ENCODE measurements at regions of chr11 and their contacts with region 1.

Region 1: GRCh38 chr11:83285771-83286528 is at the start of gene CCDC90B:
- DNase-seq: peak; percentile 96
- ATAC-seq: peak; percentile 98
- H3K4me3 ChIP-seq: peak within 1 kb of the TSS; percentile 79 to 99
- H3K27ac ChIP-seq: peak within 1 kb of the TSS; percentile 95
- H3K4me1 ChIP-seq: peaks cover 12% of the 10 kb centered on the region
- H3K27me3 ChIP-seq: no peaks in the 10 kb centered on the region
- CTCF ChIP-seq: peak; percentile 80; the same call in 1 of the 2 replicates
- total RNA-seq, gene CCDC90B: 41.9 TPM

Region 2: DNA sequence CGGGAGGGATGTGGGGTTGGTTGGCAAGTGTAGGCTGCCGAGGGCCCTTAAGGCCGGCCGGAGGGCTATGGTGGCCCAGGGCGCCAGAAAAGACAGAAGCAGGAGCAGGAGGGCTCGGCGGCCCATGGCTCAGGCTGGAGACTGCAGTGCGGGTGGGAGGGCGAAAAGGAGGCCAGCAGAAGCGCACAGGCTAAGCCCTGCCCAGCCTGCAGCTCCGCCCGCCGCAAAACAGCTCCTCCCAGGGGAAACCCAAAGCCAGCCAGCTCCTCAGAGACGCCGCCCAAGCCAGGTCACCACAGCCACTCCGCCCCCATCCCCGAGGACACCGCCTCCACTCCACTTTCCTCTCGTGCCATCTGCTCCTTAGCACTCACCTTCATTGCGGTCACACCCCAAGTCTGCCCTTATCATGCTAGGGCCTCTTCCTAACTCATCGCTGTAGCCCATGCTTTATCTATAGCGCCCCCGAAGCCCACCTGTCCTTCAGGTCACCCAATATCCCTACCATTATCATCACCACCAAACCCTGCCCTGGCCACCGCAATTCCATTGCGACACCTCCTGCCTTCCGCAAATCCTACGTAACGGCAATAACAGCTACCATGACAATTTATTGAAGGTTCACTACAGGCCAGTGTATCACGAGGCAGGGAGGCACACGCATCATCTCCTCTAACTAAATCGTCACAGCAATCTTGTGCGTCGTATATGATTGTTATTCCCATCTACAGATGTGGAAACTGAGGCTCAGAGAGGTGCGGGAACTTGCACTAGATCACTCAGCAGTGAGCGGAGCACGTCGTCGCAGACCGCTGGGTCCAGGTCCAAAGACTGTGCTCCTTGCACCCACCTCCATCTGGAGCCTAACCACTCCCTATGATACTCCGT is 385.4 kb before region 1 on chr11 and contains the start of gene PRCP:
- CTCF ChIA-PET with region 1: no interaction called
- POLR2A ChIA-PET with region 1: interaction called, 4 read pairs
- in situ Hi-C with region 1: no loop called
- intact Hi-C with region 1: loop called (anchors 10 kb)
- DNase-seq: peak; percentile 79
- ATAC-seq: peak; percentile 94
- H3K4me3 ChIP-seq: peak within 1 kb of the TSS; percentile 75 to 91
- H3K27ac ChIP-seq: peak within 1 kb of the TSS; percentile 93
- H3K4me1 ChIP-seq: peaks cover 20% of the 10 kb centered on the region
- H3K27me3 ChIP-seq: no peaks in the 10 kb centered on the region
- CTCF ChIP-seq: no peak
- total RNA-seq, gene PRCP: 57.0 TPM